Activated naive CD4-positive, alpha-beta T cell treated with anti-CD3 and anti-CD28 coated beads for 36 hours (primary cell): ENCODE measurements at regions of chr2 and their contacts with region 1.

Region 1: DNA sequence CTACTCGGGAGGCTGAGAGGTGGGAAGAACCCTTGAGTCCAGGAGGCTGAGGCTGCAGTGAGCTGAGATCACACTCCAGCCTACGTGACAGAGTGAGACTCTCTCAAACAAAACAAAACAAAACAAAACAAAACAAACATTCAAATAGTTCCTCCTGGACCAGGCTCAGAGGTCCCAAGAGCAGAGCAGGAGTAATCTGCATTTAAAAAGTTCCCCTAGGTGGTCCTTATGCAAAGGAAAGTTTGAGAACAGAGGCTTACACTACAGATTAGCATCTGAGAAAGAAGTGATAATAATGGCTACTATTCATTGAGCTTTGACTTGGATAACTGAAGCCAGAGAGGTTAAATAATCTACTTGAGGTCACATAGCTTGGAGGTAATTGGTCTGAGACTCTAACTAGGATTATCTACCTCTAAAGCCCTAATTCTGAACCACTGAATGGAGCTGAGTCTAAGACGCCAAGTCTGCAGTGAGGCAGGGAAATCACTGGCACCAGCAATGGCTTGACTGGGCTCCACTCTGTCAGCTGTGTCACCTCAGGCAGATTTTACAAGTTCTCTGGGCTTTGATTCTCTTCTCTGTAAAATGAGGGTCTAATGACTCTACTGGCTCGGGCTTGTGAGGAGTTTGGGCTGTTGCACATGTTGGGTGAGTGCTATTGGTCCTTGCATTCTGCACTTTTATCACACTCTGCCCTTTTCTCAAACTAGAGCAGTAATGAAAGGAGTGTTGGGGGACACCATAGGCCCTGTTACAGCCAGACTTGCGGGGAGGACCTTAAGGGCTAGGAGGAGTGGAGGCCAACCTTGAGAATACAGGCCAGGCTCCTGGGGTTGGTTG is 29.2 kb upstream of the DLX2 start:
- DNase-seq: no peak
- H3K4me3 Mint-ChIP-seq: no peak overlapping the region
- H3K27ac Mint-ChIP-seq: no peak overlapping the region
- H3K4me1 Mint-ChIP-seq: no peaks in the 10 kb centered on the region
- H3K27me3 Mint-ChIP-seq: no peaks in the 10 kb centered on the region

Region 2: GRCh38 chr2:171574149-171574795 is 557.7 kb before region 1 on chr2:
- CTCF ChIA-PET with region 1: interaction called, 3 read pairs
- intact Hi-C with region 1: loop called (anchors 1 kb)
- DNase-seq: peak; percentile 86
- H3K4me3 Mint-ChIP-seq: no peak overlapping the region
- H3K27ac Mint-ChIP-seq: peak overlapping the region; percentile 53
- H3K4me1 Mint-ChIP-seq: peaks cover 5% of the 10 kb centered on the region
- H3K27me3 Mint-ChIP-seq: no peaks in the 10 kb centered on the region

Region 3: GRCh38 chr2:172113617-172114016 is 18.3 kb before region 1 on chr2:
- CTCF ChIA-PET with region 1: interaction called, 14 read pairs
- intact Hi-C with region 1: no loop called
- DNase-seq: no peak
- H3K4me3 Mint-ChIP-seq: no peak overlapping the region
- H3K27ac Mint-ChIP-seq: no peak overlapping the region
- H3K4me1 Mint-ChIP-seq: peaks cover 9% of the 10 kb centered on the region
- H3K27me3 Mint-ChIP-seq: peaks cover 20% of the 10 kb centered on the region

Region 4: GRCh38 chr2:172147944-172148650 is 16.2 kb after region 1 on chr2:
- CTCF ChIA-PET with region 1: no interaction called
- intact Hi-C with region 1: no loop called
- DNase-seq: no peak
- H3K4me3 Mint-ChIP-seq: no peak overlapping the region
- H3K27ac Mint-ChIP-seq: no peak overlapping the region
- H3K4me1 Mint-ChIP-seq: peaks cover 2% of the 10 kb centered on the region
- H3K27me3 Mint-ChIP-seq: peaks cover under 1% of the 10 kb centered on the region